Natural killer cell (primary cell): ENCODE measurements at regions of chr9 and their contacts with region 1.

Region 1: DNA sequence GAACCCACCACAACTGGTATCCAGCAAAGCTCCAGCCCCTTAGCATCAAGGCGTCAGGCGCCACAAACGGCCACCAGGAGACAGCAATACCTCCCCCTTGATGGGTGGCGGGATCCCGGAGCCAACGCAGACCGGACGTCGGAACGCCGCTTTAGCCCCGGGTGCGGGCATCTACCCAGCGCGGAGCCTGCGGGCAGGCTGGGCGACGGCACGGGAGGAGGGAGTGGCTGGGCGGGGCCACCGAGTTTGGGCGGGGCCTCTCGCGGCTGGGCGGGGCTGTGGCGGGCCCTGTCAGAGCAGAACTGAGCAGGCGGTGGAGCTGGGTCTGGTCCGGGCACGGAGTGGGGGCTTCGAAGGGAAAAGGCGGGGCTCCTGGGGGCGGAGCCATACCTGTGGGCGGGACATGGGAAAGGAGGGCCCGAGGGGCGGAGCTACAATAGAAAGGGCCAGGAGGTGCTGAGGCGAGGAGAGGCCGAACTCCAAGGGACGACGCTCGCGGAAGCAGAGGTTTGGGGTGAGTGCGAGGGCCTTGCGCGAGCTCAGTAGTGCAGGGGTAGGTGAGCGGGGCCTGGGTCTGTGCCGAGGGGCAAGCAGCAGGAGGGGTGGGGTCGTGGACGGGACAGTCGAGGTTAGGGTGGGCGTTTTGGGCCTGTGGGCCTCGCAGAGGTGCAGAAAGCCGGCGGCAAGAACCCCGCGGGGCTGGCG is 40.2 kb upstream of the GARNL3 start:
- DNase-seq: peak; percentile 88 to 90
- ATAC-seq: peak; percentile 75 to 88 (median 77)
- H3K4me3 ChIP-seq: peak overlapping the region; percentile 65
- H3K4me3 Mint-ChIP-seq: peak overlapping the region; percentile 88
- H3K27ac ChIP-seq: peak overlapping the region; percentile 55
- H3K27ac Mint-ChIP-seq: peak overlapping the region; percentile 81 to 98
- H3K4me1 ChIP-seq: peaks cover 22% of the 10 kb centered on the region
- H3K4me1 Mint-ChIP-seq: peaks cover 15 to 32% of the 10 kb centered on the region in 2 donors
- H3K27me3 ChIP-seq: peaks cover 2% of the 10 kb centered on the region
- H3K27me3 Mint-ChIP-seq: peaks cover 6 to 14% of the 10 kb centered on the region in 2 donors
- CTCF ChIP-seq: no peak

Region 2: GRCh38 chr9:127244609-127245601 is 20.6 kb after region 1 on chr9:
- intact Hi-C with region 1: loop called (anchors 1 kb)
- DNase-seq: peak; percentile 92 to 95
- ATAC-seq: peak; percentile 100
- H3K4me3 ChIP-seq: peak overlapping the region; percentile 53
- H3K4me3 Mint-ChIP-seq: peak overlapping the region; percentile 87
- H3K27ac ChIP-seq: no peak overlapping the region
- H3K27ac Mint-ChIP-seq: peak overlapping the region; percentile 22 to 78
- H3K4me1 ChIP-seq: peaks cover 10% of the 10 kb centered on the region
- H3K4me1 Mint-ChIP-seq: peaks cover 5 to 8% of the 10 kb centered on the region in 2 donors
- H3K27me3 ChIP-seq: no peaks in the 10 kb centered on the region
- H3K27me3 Mint-ChIP-seq: peaks cover 3 to 4% of the 10 kb centered on the region in 2 donors
- CTCF ChIP-seq: no peak

Region 3: GRCh38 chr9:127396808-127397497 is 172.6 kb after region 1 on chr9 and contains the start of gene SLC2A8:
- intact Hi-C with region 1: loop called (anchors 10 kb)
- DNase-seq: peak; percentile 96 to 97
- ATAC-seq: peak; percentile 90 to 98 (median 92)
- H3K4me3 ChIP-seq: peak within 1 kb of the TSS; percentile 43
- H3K4me3 Mint-ChIP-seq: peak within 1 kb of the TSS; percentile 83
- H3K27ac ChIP-seq: no peak within 1 kb of the TSS
- H3K27ac Mint-ChIP-seq: peak within 1 kb of the TSS; percentile 57 to 84
- H3K4me1 ChIP-seq: peaks cover 23% of the 10 kb centered on the region
- H3K4me1 Mint-ChIP-seq: peaks cover 9 to 13% of the 10 kb centered on the region in 2 donors
- H3K27me3 ChIP-seq: peaks cover 14% of the 10 kb centered on the region
- H3K27me3 Mint-ChIP-seq: peaks cover 11 to 14% of the 10 kb centered on the region in 2 donors
- CTCF ChIP-seq: no peak
- total RNA-seq, gene SLC2A8: 21.1 to 30.6 (median 30.0) TPM